MCF 10A (cell line): ENCODE measurements at regions of chr5 and their contacts with region 1.

Region 1: GRCh38 chr5:165630261-165630778 is 2124.9 kb downstream of the MAT2B start:
- DNase-seq: peak; percentile 87
- H3K4me3 Mint-ChIP-seq: no peak overlapping the region
- H3K27ac Mint-ChIP-seq: no peak overlapping the region
- H3K4me1 Mint-ChIP-seq: peaks cover 11% of the 10 kb centered on the region
- H3K27me3 Mint-ChIP-seq: no peaks in the 10 kb centered on the region
- CTCF ChIP-seq: peak; percentile 84

Region 2: GRCh38 chr5:165325221-165325620 is 305.1 kb before region 1 on chr5:
- CTCF ChIA-PET with region 1: no interaction called
- POLR2A ChIA-PET with region 1: no interaction called
- intact Hi-C with region 1: no loop called
- DNase-seq: peak; percentile 93
- H3K4me3 Mint-ChIP-seq: no peak overlapping the region
- H3K27ac Mint-ChIP-seq: no peak overlapping the region
- H3K4me1 Mint-ChIP-seq: peaks cover 26% of the 10 kb centered on the region
- H3K27me3 Mint-ChIP-seq: no peaks in the 10 kb centered on the region
- CTCF ChIP-seq: no peak

Region 3: DNA sequence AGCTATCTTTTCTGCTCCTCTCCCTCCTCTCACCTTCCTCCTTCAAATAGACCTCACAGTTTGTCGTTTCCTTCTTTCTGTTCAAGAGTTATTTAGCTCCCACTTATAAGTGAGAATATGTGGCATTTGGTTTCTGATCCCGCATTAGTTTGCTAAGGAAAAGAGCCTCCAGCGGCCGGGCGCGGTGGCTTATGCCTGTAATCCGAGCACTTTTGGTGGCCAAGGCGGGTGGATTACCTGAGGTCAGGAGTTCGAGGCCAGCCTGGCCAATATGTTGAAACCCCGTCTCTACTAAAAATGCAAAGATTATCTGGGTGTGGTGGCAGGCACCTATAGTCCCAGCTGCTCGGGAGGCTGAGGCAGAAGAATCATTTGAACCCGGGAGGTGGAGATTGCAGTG is 23.3 kb before region 1 on chr5:
- CTCF ChIA-PET with region 1: interaction called, 10 read pairs
- POLR2A ChIA-PET with region 1: no interaction called
- intact Hi-C with region 1: no loop called
- DNase-seq: no peak
- H3K4me3 Mint-ChIP-seq: no peak overlapping the region
- H3K27ac Mint-ChIP-seq: no peak overlapping the region
- H3K4me1 Mint-ChIP-seq: no peaks in the 10 kb centered on the region
- H3K27me3 Mint-ChIP-seq: no peaks in the 10 kb centered on the region
- CTCF ChIP-seq: no peak

Region 4: DNA sequence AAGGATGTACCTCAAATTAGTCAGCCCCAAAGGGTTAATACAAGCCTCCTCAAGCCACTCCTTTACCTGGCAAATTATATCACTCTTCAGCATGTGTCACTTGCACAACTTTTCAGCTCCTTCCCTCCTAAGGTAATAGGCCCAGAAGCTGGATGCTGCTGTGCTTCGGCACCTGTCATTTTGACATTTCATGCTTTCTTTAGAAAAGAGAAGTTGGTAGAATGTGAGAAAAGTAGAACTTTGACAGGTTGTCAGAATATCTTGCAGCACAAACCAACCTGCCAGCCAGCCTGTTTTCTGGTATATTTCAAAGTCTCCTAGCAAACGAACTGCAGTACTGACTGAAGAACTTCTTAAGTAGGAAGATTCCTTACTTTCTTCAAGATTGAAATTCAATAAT is 12.0 kb after region 1 on chr5:
- CTCF ChIA-PET with region 1: interaction called, 16 read pairs
- POLR2A ChIA-PET with region 1: no interaction called
- intact Hi-C with region 1: no loop called
- DNase-seq: no peak
- H3K4me3 Mint-ChIP-seq: no peak overlapping the region
- H3K27ac Mint-ChIP-seq: no peak overlapping the region
- H3K4me1 Mint-ChIP-seq: no peaks in the 10 kb centered on the region
- H3K27me3 Mint-ChIP-seq: no peaks in the 10 kb centered on the region
- CTCF ChIP-seq: no peak

Region 5: DNA sequence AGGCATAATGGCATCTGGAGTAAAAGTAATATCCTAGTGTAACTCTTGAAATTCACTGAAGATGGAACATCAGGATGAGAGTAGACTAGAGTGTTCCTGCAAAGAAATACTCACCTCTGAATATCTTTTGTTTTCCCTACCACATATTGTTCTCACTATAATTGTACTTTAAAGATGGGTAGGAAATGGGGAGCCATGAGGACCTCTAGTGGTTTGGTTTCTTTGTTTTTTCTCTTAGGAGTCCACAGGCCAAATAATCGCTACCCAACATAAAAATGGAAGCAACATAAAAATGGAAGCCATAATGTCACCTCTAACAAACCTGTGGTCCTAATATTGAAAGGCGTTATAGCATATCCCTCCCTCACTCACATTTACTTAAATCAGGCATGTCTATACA is 250.9 kb after region 1 on chr5:
- CTCF ChIA-PET with region 1: interaction called, 19 read pairs
- POLR2A ChIA-PET with region 1: no interaction called
- intact Hi-C with region 1: loop called (anchors 1 kb)
- DNase-seq: peak; percentile 54
- H3K4me3 Mint-ChIP-seq: no peak overlapping the region
- H3K27ac Mint-ChIP-seq: no peak overlapping the region
- H3K4me1 Mint-ChIP-seq: no peaks in the 10 kb centered on the region
- H3K27me3 Mint-ChIP-seq: no peaks in the 10 kb centered on the region
- CTCF ChIP-seq: peak; percentile 31

Region 6: GRCh38 chr5:166509085-166509484 is 878.8 kb after region 1 on chr5:
- CTCF ChIA-PET with region 1: interaction called, 4 read pairs
- POLR2A ChIA-PET with region 1: no interaction called
- intact Hi-C with region 1: loop called (anchors 10 kb)
- DNase-seq: peak; percentile 71
- H3K4me3 Mint-ChIP-seq: no peak overlapping the region
- H3K27ac Mint-ChIP-seq: no peak overlapping the region
- H3K4me1 Mint-ChIP-seq: no peaks in the 10 kb centered on the region
- H3K27me3 Mint-ChIP-seq: peaks cover 10% of the 10 kb centered on the region
- CTCF ChIP-seq: no peak

Region 7: GRCh38 chr5:167217097-167217743 is 1586.9 kb after region 1 on chr5:
- CTCF ChIA-PET with region 1: interaction called, 8 read pairs
- POLR2A ChIA-PET with region 1: no interaction called
- intact Hi-C with region 1: loop called (anchors 1 kb)
- DNase-seq: peak; percentile 27
- H3K4me3 Mint-ChIP-seq: no peak overlapping the region
- H3K27ac Mint-ChIP-seq: no peak overlapping the region
- H3K4me1 Mint-ChIP-seq: no peaks in the 10 kb centered on the region
- H3K27me3 Mint-ChIP-seq: no peaks in the 10 kb centered on the region
- CTCF ChIP-seq: peak; percentile 44

Region 8: DNA sequence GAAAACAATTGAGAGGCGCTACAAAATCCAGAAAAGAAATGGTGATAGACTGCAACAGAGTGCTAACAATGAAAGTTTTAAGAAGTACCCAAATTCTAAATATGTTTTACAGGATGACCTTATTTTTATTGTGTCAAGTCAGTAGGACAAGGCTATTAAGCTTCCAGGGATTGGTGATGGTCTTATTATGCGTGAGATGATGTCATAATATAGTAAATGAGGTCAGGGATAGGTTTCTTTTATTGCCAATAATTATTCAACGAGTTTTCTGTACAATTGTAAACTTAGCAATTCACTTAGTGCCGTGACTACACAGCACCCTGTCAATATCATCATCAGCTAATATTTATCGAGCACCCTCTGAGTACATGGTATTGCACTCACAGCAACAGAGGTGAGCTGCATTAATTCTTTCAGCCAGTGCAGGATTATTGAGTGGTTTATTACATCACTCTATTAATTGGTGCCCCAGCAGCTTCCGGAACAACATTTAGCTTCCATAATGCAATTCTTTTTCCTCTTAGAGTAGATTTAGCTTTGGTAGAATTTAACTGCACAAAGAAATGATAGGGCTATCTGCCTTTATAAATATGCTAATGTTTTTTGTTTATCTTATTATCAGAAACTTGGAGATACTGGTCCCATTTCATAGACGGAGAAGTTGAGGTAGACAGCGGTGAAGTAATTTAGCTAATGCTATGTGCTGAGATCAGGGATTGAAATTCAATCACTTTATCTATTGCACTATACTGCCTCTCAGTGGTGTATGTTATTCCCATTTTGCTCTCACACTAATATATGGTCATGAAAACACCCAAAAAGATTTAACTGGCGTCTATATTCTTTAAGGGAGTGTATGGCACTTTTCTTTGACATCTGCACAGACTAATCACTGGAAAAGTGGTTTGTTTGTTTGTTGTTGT is 1935.0 kb after region 1 on chr5:
- CTCF ChIA-PET with region 1: interaction called, 29 read pairs
- POLR2A ChIA-PET with region 1: no interaction called
- intact Hi-C with region 1: loop called (anchors 1 kb)
- DNase-seq: peak; percentile 64
- H3K4me3 Mint-ChIP-seq: no peak overlapping the region
- H3K27ac Mint-ChIP-seq: no peak overlapping the region
- H3K4me1 Mint-ChIP-seq: no peaks in the 10 kb centered on the region
- H3K27me3 Mint-ChIP-seq: peaks cover 9% of the 10 kb centered on the region
- CTCF ChIP-seq: peak; percentile 77